CD4-positive, alpha-beta T cell (primary cell): ENCODE measurements at regions of chr6 and their contacts with region 1.

Region 1: GRCh38 chr6:12890171-12890790 is 173.7 kb downstream of the PHACTR1 start:
- DNase-seq: peak in 4 of 14 experiments; percentile 1 to 20 (median 9)
- ATAC-seq: no peak
- H3K4me3 ChIP-seq: no peak overlapping the region
- H3K4me3 Mint-ChIP-seq: no peak overlapping the region
- H3K27ac ChIP-seq: no peak overlapping the region
- H3K27ac Mint-ChIP-seq: no peak overlapping the region
- H3K4me1 ChIP-seq: peaks cover 2% of the 10 kb centered on the region
- H3K4me1 Mint-ChIP-seq: no peaks in the 10 kb centered on the region
- H3K27me3 ChIP-seq: peaks cover 0 to 8% of the 10 kb centered on the region in 2 experiments
- H3K27me3 Mint-ChIP-seq: peaks cover 27% of the 10 kb centered on the region
- CTCF ChIP-seq: no peak

Region 2: DNA sequence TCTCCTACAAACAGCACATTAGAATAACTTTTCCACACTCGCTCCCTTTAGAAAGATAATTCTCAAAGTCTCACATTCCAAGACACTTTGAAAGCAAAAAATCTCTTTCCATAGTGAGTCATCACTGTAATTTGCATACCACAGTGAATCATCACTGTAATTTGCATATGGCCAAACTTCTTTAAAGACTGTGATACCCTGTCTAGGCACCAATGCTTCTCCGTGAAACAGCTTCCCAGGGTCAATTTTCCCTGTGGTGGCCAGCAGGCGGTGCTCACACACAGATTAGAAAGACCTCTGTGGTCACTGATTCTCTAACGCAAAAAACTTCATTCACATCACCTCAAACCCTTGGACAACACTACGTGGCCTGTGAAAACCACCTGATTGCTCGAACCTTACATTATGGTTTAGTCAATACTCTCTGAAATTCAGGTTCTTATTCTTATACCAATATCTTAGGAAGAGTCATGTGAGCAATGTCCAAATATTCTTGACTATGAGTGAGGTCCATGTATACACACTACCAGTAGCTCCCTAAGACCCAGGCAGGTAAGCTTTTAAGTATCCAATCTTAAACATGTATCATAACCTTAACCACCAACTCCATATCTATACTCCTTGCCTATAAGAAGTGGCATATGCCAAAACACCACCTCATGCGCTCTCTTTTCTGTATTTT is 252.2 kb before region 1 on chr6:
- CTCF ChIA-PET with region 1: no interaction called
- POLR2A ChIA-PET with region 1: no interaction called
- intact Hi-C with region 1: loop called in 1 of 2 experiments (anchors 10 kb)
- DNase-seq: peak in 6 of 14 experiments; percentile 0 to 53 (median 6)
- ATAC-seq: no peak
- H3K4me3 ChIP-seq: no peak overlapping the region
- H3K4me3 Mint-ChIP-seq: no peak overlapping the region
- H3K27ac ChIP-seq: no peak overlapping the region
- H3K27ac Mint-ChIP-seq: no peak overlapping the region
- H3K4me1 ChIP-seq: no peaks in the 10 kb centered on the region
- H3K4me1 Mint-ChIP-seq: no peaks in the 10 kb centered on the region
- H3K27me3 ChIP-seq: peaks cover 0 to 4% of the 10 kb centered on the region in 2 experiments
- H3K27me3 Mint-ChIP-seq: peaks cover 42% of the 10 kb centered on the region
- CTCF ChIP-seq: peak; percentile 38

Region 3: GRCh38 chr6:13012977-13013680 is 122.8 kb after region 1 on chr6:
- CTCF ChIA-PET with region 1: no interaction called
- POLR2A ChIA-PET with region 1: no interaction called
- intact Hi-C with region 1: no loop called
- DNase-seq: peak in 1 of 14 experiments; percentile 5
- ATAC-seq: no peak
- H3K4me3 ChIP-seq: peak overlapping the region; percentile 16
- H3K4me3 Mint-ChIP-seq: peak overlapping the region; percentile 67
- H3K27ac ChIP-seq: no peak overlapping the region
- H3K27ac Mint-ChIP-seq: no peak overlapping the region
- H3K4me1 ChIP-seq: peaks cover 9% of the 10 kb centered on the region
- H3K4me1 Mint-ChIP-seq: peaks cover 5% of the 10 kb centered on the region
- H3K27me3 ChIP-seq: peaks cover 32 to 45% of the 10 kb centered on the region in 2 experiments
- H3K27me3 Mint-ChIP-seq: peaks cover 76% of the 10 kb centered on the region
- CTCF ChIP-seq: no peak

Region 4: GRCh38 chr6:13146442-13146841 is 256.2 kb after region 1 on chr6:
- CTCF ChIA-PET with region 1: no interaction called
- POLR2A ChIA-PET with region 1: no interaction called
- intact Hi-C with region 1: no loop called
- DNase-seq: no peak
- ATAC-seq: no peak
- H3K4me3 ChIP-seq: no peak overlapping the region
- H3K4me3 Mint-ChIP-seq: no peak overlapping the region
- H3K27ac ChIP-seq: no peak overlapping the region
- H3K27ac Mint-ChIP-seq: no peak overlapping the region
- H3K4me1 ChIP-seq: no peaks in the 10 kb centered on the region
- H3K4me1 Mint-ChIP-seq: no peaks in the 10 kb centered on the region
- H3K27me3 ChIP-seq: no peaks in the 10 kb centered on the region
- H3K27me3 Mint-ChIP-seq: no peaks in the 10 kb centered on the region
- CTCF ChIP-seq: no peak